Naive thymus-derived CD4-positive, alpha-beta T cell (primary cell): ENCODE measurements at regions of chr5 and their contacts with region 1.

Region 1: DNA sequence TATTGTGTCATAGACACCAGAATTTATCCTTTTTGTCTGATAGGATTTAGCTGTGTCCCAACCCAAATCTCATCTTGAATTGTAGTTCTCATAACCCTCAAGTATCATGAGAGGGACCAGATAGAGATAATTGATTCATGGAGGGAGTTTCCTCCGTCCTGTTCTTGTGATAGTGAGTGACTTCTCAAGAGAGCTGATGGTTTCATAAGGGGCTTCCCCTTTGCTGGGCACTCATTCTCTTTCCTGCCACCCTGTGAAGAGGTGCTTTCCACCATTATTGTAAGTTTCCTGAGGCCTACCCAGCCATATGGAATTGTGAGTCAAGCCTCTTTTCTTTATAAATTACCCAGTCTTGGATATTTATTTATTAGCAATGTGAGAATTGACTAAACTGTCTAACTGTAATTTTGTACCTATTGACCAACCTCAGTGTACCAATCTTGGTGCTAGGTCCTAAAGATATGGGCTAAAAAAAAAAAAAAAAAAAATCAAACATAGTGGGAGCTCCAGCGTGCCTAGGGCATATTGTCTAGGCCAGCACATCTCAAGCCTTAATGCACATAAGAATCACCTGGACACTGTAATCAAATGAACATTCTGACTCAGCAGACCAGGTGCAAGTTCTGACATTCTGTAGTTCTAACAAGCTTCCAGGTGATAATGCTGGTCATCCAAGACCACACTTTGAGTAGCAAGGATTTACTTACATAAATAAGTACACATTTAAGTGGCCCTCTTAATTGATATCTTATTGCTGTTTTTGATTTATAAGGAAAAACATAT is 30.5 kb downstream of the ST8SIA4 start:
- DNase-seq: no peak
- ATAC-seq: peak; percentile 40
- H3K4me3 ChIP-seq: no peak overlapping the region
- H3K4me3 Mint-ChIP-seq: no peak overlapping the region
- H3K27ac ChIP-seq: no peak overlapping the region
- H3K27ac Mint-ChIP-seq: peak overlapping the region in 7 of 9 donors; percentile 0 to 64 (median 36)
- H3K4me1 ChIP-seq: peaks cover 0 to 8% of the 10 kb centered on the region in 2 donors
- H3K4me1 Mint-ChIP-seq: peaks cover 15 to 53% (median 40%) of the 10 kb centered on the region in 7 donors
- H3K27me3 ChIP-seq: no peaks in the 10 kb centered on the region
- H3K27me3 Mint-ChIP-seq: no peaks in the 10 kb centered on the region

Region 2: DNA sequence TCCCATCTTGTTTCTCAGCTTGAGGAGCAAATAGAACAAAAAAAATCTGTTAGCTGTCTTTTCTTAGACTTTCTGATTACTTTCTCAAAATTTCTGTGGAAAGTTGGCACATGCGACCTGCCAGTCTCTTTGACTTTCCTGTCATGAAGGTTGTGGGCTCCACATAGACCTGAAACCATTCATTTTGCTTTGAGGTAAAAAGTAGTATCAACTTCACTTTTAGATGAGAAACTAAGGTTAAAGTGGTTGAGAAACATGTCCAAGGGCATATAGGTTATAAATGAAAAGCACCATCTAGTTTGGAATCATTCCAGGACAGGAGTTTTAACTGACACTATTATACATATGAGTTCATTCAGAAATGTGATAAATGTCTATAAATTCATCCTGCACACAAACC is 12.2 kb before region 1 on chr5:
- CTCF ChIA-PET with region 1: no interaction called
- POLR2A ChIA-PET with region 1: interaction called, 3 read pairs
- intact Hi-C with region 1: loop called (anchors 1 to 2 kb)
- DNase-seq: no peak
- ATAC-seq: no peak
- H3K4me3 ChIP-seq: no peak overlapping the region
- H3K4me3 Mint-ChIP-seq: no peak overlapping the region
- H3K27ac ChIP-seq: no peak overlapping the region
- H3K27ac Mint-ChIP-seq: peak overlapping the region in 1 of 9 donors; percentile 68
- H3K4me1 ChIP-seq: peaks cover 0 to 6% of the 10 kb centered on the region in 2 donors
- H3K4me1 Mint-ChIP-seq: peaks cover 21 to 65% (median 48%) of the 10 kb centered on the region in 7 donors
- H3K27me3 ChIP-seq: no peaks in the 10 kb centered on the region
- H3K27me3 Mint-ChIP-seq: no peaks in the 10 kb centered on the region

Region 3: GRCh38 chr5:100890461-100891008 is 17.9 kb after region 1 on chr5:
- CTCF ChIA-PET with region 1: no interaction called
- POLR2A ChIA-PET with region 1: no interaction called
- intact Hi-C with region 1: loop called (anchors 2 kb)
- DNase-seq: no peak
- ATAC-seq: peak; percentile 47
- H3K4me3 ChIP-seq: peak overlapping the region; percentile 10
- H3K4me3 Mint-ChIP-seq: peak overlapping the region in 9 of 10 donors; percentile 6 to 81 (median 69)
- H3K27ac ChIP-seq: no peak overlapping the region
- H3K27ac Mint-ChIP-seq: peak overlapping the region; percentile 39 to 92 (median 72)
- H3K4me1 ChIP-seq: peaks cover 26 to 34% of the 10 kb centered on the region in 2 donors
- H3K4me1 Mint-ChIP-seq: peaks cover 27 to 83% (median 71%) of the 10 kb centered on the region in 7 donors
- H3K27me3 ChIP-seq: no peaks in the 10 kb centered on the region
- H3K27me3 Mint-ChIP-seq: no peaks in the 10 kb centered on the region